Activated CD4-positive, alpha-beta memory T cell treated with anti-CD3 and anti-CD28 coated beads, Interleukin-2, amount 10 ng/mL, durations not matched to agents 7 days and 5 days (primary cell): ENCODE measurements at regions of chr6 and their contacts with region 1.

Region 1: DNA sequence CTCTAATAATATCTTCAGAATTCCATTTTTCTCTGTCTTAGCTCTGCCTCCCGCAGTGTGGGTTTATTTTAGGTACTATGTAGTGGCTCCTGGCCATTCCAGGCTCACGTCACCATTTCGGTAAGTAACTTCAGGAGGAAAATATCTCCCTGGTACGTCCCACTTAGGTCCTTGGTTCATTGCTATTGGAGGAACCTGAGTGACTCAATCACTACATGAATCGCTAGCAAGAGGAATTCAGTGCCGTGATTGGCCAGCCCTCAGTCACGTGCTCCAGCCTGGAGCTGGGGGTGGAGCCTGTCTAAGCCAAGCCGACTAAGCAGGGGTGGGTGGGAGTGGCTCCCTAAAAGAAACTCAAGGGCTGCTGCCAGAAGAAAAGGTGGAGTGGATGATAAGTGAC is 67.3 kb upstream of the E2F3 start:
- DNase-seq: no peak
- H3K4me3 Mint-ChIP-seq: no peak overlapping the region
- H3K27ac Mint-ChIP-seq: no peak overlapping the region
- H3K4me1 Mint-ChIP-seq: peaks cover 24% of the 10 kb centered on the region
- H3K27me3 Mint-ChIP-seq: peaks cover 4% of the 10 kb centered on the region

Region 2: GRCh38 chr6:20312606-20313005 is 21.7 kb before region 1 on chr6:
- CTCF ChIA-PET with region 1: no interaction called
- POLR2A ChIA-PET with region 1: interaction called, 12 read pairs
- DNase-seq: no peak
- H3K4me3 Mint-ChIP-seq: no peak overlapping the region
- H3K27ac Mint-ChIP-seq: no peak overlapping the region
- H3K4me1 Mint-ChIP-seq: peaks cover 3% of the 10 kb centered on the region
- H3K27me3 Mint-ChIP-seq: peaks cover 10% of the 10 kb centered on the region

Region 3: GRCh38 chr6:20377623-20378265 is 43.4 kb after region 1 on chr6:
- CTCF ChIA-PET with region 1: no interaction called
- POLR2A ChIA-PET with region 1: no interaction called
- DNase-seq: no peak
- H3K4me3 Mint-ChIP-seq: no peak overlapping the region
- H3K27ac Mint-ChIP-seq: no peak overlapping the region
- H3K4me1 Mint-ChIP-seq: peaks cover 24% of the 10 kb centered on the region
- H3K27me3 Mint-ChIP-seq: no peaks in the 10 kb centered on the region